ENCODE measurements at regions of chr3 and their contacts with region 1.

Region 1: GRCh38 chr3:129934234-129935123 is 40.0 kb upstream of the TRH start:
- DNase-seq: no peak
- H3K4me3 ChIP-seq: no peak overlapping the region
- H3K27ac ChIP-seq: no peak overlapping the region
- H3K4me1 ChIP-seq: peaks cover 0 to 5% (median 0%) of the 10 kb centered on the region in 4 donors
- H3K27me3 ChIP-seq: no peaks in the 10 kb centered on the region
- CTCF ChIP-seq: peak; percentile 87 to 90

Region 2: GRCh38 chr3:129633751-129634392 is 300.6 kb before region 1 on chr3:
- intact Hi-C with region 1: loop called (anchors 5 kb)
- DNase-seq: no peak
- H3K4me3 ChIP-seq: no peak overlapping the region
- H3K27ac ChIP-seq: no peak overlapping the region
- H3K4me1 ChIP-seq: peaks cover 0 to 3% (median 0%) of the 10 kb centered on the region in 4 donors
- H3K27me3 ChIP-seq: no peaks in the 10 kb centered on the region
- CTCF ChIP-seq: no peak

Region 3: GRCh38 chr3:129650256-129650872 is 284.1 kb before region 1 on chr3:
- intact Hi-C with region 1: loop called (anchors 5 kb)
- DNase-seq: peak; percentile 79 to 81
- H3K4me3 ChIP-seq: no peak overlapping the region
- H3K27ac ChIP-seq: no peak overlapping the region
- H3K4me1 ChIP-seq: peaks cover 0 to 29% (median 19%) of the 10 kb centered on the region in 4 donors
- H3K27me3 ChIP-seq: no peaks in the 10 kb centered on the region
- CTCF ChIP-seq: peak; percentile 64 to 84

Region 4: DNA sequence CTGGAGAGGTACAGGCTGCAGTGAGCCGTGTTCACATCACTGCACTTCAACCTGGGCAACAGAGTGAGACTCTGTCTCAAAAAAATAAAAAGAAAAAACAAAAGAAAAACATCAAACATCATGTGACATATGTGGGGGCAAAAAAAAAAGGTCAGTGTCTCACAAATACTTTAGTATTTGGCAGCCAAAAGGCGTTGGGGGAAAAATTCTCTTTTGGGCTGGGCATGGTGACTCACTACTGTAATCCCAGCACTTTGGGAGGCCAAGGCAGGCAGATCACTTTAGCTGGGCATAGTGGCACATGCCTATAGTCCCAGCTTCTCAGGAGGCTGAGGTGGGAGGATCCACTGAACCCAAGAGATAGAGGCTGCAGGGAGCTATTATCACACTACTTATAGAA is 88.5 kb before region 1 on chr3:
- intact Hi-C with region 1: loop called (anchors 10 kb)
- DNase-seq: no peak
- H3K4me3 ChIP-seq: no peak overlapping the region
- H3K27ac ChIP-seq: no peak overlapping the region
- H3K4me1 ChIP-seq: peaks cover 0 to 24% (median 5%) of the 10 kb centered on the region in 4 donors
- H3K27me3 ChIP-seq: no peaks in the 10 kb centered on the region
- CTCF ChIP-seq: no peak

Region 5: DNA sequence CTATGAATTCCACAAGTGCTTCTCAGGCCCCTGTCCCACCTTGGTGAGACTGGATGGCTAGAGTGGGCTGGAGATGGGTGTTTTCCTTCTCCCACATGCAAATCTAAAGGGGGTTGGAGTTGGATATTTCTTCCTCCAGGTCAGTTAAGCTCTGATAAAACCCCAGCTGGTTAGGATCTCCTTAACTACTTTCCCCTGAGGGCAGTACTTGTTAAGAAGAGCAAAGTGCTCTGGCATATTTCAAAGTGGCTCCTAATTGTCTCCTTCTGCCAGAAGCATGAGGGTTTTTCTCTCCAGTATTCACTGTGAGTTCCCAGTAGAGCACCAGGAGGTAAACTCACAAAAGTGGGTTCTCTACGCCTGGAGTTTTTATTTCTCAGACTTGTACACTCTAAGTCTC is 613.9 kb after region 1 on chr3:
- intact Hi-C with region 1: no loop called
- DNase-seq: no peak
- H3K4me3 ChIP-seq: no peak overlapping the region
- H3K27ac ChIP-seq: no peak overlapping the region
- H3K4me1 ChIP-seq: no peaks in the 10 kb centered on the region
- H3K27me3 ChIP-seq: no peaks in the 10 kb centered on the region
- CTCF ChIP-seq: no peak